Activated CD4-positive, alpha-beta memory T cell treated with anti-CD3 and anti-CD28 coated beads for 36 hours (primary cell): ENCODE measurements at regions of chr2 and their contacts with region 1.

Region 1: DNA sequence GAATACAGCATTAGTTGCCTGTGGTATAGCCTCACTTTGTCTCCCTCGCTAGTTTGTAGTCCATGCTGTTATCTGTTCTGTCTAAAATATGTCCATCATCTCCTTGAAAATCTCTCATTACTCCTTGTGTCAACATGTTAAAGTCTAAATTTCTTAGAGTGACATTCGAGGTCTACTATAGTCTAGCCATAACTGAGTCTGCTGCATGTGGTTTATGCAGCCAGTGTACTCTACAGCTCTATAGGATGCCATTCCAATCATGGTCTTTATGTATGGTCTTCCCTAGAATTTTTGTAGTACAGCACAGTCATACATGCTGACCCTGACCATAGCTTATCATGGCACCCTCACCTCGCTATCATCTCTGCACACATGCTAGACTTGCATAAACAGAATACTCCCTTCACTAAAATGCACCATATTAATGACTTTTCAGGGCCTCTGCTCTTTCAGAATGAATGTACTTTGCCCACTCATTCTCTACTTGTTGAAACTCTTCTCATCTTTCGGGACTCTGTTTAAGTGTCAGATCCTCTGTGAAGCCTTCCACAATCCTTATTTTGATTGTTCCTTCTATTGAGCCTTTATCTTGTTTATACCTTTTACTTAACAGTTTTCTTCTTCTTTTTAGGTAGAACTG is 12.8 kb downstream of the TANK start:
- DNase-seq: peak; percentile 22
- H3K4me3 Mint-ChIP-seq: no peak overlapping the region
- H3K27ac Mint-ChIP-seq: peak overlapping the region; percentile 55
- H3K4me1 Mint-ChIP-seq: peaks cover 81% of the 10 kb centered on the region
- H3K27me3 Mint-ChIP-seq: no peaks in the 10 kb centered on the region

Region 2: GRCh38 chr2:161190050-161190449 is 17.0 kb after region 1 on chr2:
- CTCF ChIA-PET with region 1: no interaction called
- POLR2A ChIA-PET with region 1: no interaction called
- intact Hi-C with region 1: no loop called
- DNase-seq: no peak
- H3K4me3 Mint-ChIP-seq: no peak overlapping the region
- H3K27ac Mint-ChIP-seq: no peak overlapping the region
- H3K4me1 Mint-ChIP-seq: peaks cover 53% of the 10 kb centered on the region
- H3K27me3 Mint-ChIP-seq: no peaks in the 10 kb centered on the region

Region 3: DNA sequence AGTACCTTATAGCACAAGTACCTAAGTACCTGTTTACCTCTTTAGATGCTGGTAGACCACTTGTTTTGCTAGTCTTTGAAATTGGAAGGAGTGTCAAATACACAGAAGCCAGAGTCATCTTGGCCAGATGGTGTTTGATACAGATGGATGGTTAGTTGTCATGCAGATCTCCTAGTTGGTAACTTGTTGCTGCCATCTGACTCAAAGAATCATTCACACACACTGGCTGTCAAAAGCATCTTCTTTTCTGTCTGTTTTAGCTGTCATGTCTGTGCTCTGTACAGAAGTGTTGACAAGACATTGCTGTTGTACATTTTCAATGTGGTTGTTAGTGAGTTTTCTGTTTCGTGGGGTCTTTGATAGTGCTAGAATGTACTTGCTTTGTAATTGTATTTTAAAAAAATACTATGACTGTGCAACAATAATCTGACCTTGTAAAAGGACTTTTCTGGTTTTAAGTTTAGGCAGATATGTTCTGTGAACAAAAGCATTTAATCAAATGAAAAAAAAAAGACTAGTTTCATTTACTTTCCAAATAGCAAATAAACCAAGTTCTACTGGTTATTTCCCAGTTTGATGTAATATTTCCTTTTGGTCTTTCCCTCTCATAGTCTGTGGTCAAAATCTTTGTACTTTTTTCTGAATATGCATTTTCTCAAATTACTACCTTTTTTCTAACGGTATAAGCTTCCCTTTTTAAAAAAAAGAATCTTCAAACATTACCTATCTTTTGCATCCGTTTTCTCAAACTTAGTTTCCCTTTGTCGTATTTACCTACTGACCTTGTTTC is 27.1 kb after region 1 on chr2:
- CTCF ChIA-PET with region 1: no interaction called
- POLR2A ChIA-PET with region 1: no interaction called
- intact Hi-C with region 1: loop called (anchors 1 kb)
- DNase-seq: no peak
- H3K4me3 Mint-ChIP-seq: peak overlapping the region; percentile 67
- H3K27ac Mint-ChIP-seq: peak overlapping the region; percentile 86
- H3K4me1 Mint-ChIP-seq: peaks cover 36% of the 10 kb centered on the region
- H3K27me3 Mint-ChIP-seq: no peaks in the 10 kb centered on the region